Sigmoid colon (tissue), 7 donors: ENCODE measurements at regions of chr5 and their contacts with region 1.

Region 1: DNA sequence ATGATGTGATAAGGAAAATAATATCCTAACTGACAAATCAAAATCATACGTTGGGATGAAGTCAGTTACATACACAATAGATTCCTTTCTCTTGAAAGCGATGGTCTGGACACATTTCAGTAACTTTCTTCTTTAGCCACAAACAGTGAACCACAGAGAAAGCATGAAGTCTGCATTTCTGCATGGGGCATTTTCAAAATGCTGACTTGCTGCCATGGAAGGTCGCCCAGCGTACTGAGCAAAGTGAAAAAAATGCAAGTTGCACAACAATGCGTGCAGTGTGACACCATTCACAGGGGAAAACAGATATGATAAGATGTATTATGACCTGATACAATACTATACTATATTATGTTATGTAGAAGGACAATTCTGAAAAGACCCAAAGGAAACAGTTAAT is 146.3 kb downstream of the SNX18 start:
- DNase-seq: peak; percentile 78
- H3K4me3 ChIP-seq: no peak overlapping the region
- H3K27ac ChIP-seq: peak overlapping the region in 1 of 4 donors; percentile 56
- H3K4me1 ChIP-seq: peaks cover 0 to 30% (median 13%) of the 10 kb centered on the region in 4 donors
- H3K27me3 ChIP-seq: no peaks in the 10 kb centered on the region
- CTCF ChIP-seq: no peak
- EP300 ChIP-seq: no peak
- POLR2A ChIP-seq: no peak

Region 2: GRCh38 chr5:54533541-54534190 is 130.2 kb before region 1 on chr5:
- intact Hi-C with region 1: loop called (anchors 5 kb)
- DNase-seq: no peak
- H3K4me3 ChIP-seq: peak overlapping the region in 1 of 4 donors; percentile 1
- H3K27ac ChIP-seq: peak overlapping the region; percentile 59 to 85 (median 72)
- H3K4me1 ChIP-seq: peaks cover 0 to 78% (median 54%) of the 10 kb centered on the region in 4 donors
- H3K27me3 ChIP-seq: no peaks in the 10 kb centered on the region
- CTCF ChIP-seq: no peak
- EP300 ChIP-seq: no peak
- POLR2A ChIP-seq: no peak